GM10248 (cell line): ENCODE measurements at regions of chr5 and their contacts with region 1.

Region 1: GRCh38 chr5:148179234-148179824 is 11.0 kb downstream of the SPINK14 start:
- DNase-seq: peak; percentile 10
- CTCF ChIP-seq: peak; percentile 57

Region 2: GRCh38 chr5:148374692-148375360 is 195.5 kb after region 1 on chr5:
- CTCF ChIA-PET with region 1: interaction called, 20 read pairs
- POLR2A ChIA-PET with region 1: no interaction called
- DNase-seq: peak; percentile 13
- CTCF ChIP-seq: peak; percentile 59

Region 3: DNA sequence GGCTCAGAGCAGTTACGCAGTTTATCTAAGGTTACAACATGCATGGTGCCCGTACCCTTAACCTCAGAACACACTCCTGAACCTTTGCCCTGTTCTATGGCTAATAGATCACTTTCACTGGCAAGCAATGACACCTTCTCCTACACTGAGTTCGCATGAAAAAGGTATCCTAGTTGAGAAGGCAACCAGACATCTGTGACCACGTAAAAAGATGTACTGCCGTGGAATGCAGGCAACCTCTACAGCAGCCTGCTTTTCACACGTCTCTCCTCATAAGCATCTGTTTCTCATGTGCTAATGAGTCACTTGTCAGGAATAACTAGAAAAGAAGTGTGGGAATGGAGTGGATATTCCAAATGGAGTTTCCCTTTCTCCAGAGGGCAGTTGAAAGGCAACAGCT is 275.9 kb after region 1 on chr5:
- CTCF ChIA-PET with region 1: interaction called, 11 read pairs
- POLR2A ChIA-PET with region 1: no interaction called
- DNase-seq: no peak
- CTCF ChIP-seq: no peak

Region 4: DNA sequence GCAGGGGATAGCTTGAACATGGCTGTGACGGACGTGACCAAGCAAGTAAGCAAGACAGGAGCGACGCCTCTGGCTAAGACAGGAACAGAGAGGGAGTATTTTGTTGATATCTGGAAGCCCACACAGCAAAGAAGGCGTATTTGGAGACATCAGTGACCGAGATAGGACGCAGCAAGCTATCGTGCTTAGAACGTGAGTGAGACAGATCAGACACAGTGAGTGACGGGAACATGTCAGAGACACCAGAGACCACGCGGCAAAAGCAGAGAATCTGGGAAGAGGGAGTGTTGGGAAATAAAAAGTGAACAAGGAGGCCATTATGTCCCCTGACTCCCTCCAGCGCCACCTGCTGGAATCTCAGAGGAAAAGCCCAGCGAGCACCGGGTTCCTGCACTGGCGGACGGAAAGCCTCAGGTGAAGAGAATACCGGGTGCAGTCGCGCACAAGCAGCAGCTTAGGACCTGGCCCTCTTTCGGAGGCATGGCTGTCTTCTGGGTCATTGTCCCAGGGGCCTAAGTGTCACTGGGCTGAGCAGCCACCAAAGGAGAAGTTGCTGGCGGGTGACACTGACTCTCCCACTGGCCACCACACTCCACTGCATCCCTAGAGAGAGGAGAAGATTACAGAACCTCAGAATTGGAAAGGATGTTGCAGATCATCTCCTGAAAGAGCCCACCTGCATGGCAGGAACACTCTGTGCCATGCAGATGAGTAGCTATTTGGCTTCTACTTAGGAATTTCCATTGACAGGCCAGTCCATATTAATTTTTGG is 303.5 kb after region 1 on chr5:
- CTCF ChIA-PET with region 1: interaction called, 20 read pairs
- POLR2A ChIA-PET with region 1: no interaction called
- DNase-seq: peak; percentile 53
- CTCF ChIP-seq: peak; percentile 84